Activated naive CD4-positive, alpha-beta T cell treated with anti-CD3 and anti-CD28 coated beads for 36 hours (primary cell): ENCODE measurements at regions of chr2 and their contacts with region 1.

Region 1: GRCh38 chr2:184425083-184425482 is 173.2 kb upstream of the ZNF804A start:
- DNase-seq: no peak
- H3K4me3 Mint-ChIP-seq: no peak overlapping the region
- H3K27ac Mint-ChIP-seq: no peak overlapping the region
- H3K4me1 Mint-ChIP-seq: no peaks in the 10 kb centered on the region
- H3K27me3 Mint-ChIP-seq: no peaks in the 10 kb centered on the region

Region 2: GRCh38 chr2:184452907-184453306 is 27.8 kb after region 1 on chr2:
- CTCF ChIA-PET with region 1: no interaction called
- intact Hi-C with region 1: no loop called
- DNase-seq: no peak
- H3K4me3 Mint-ChIP-seq: no peak overlapping the region
- H3K27ac Mint-ChIP-seq: no peak overlapping the region
- H3K4me1 Mint-ChIP-seq: no peaks in the 10 kb centered on the region
- H3K27me3 Mint-ChIP-seq: no peaks in the 10 kb centered on the region

Region 3: GRCh38 chr2:184481865-184482264 is 56.8 kb after region 1 on chr2:
- CTCF ChIA-PET with region 1: no interaction called
- intact Hi-C with region 1: loop called (anchors 2 kb)
- DNase-seq: no peak
- H3K4me3 Mint-ChIP-seq: no peak overlapping the region
- H3K27ac Mint-ChIP-seq: no peak overlapping the region
- H3K4me1 Mint-ChIP-seq: no peaks in the 10 kb centered on the region
- H3K27me3 Mint-ChIP-seq: no peaks in the 10 kb centered on the region